ENCODE measurements at regions of chr4 and their contacts with region 1.

Region 1: DNA sequence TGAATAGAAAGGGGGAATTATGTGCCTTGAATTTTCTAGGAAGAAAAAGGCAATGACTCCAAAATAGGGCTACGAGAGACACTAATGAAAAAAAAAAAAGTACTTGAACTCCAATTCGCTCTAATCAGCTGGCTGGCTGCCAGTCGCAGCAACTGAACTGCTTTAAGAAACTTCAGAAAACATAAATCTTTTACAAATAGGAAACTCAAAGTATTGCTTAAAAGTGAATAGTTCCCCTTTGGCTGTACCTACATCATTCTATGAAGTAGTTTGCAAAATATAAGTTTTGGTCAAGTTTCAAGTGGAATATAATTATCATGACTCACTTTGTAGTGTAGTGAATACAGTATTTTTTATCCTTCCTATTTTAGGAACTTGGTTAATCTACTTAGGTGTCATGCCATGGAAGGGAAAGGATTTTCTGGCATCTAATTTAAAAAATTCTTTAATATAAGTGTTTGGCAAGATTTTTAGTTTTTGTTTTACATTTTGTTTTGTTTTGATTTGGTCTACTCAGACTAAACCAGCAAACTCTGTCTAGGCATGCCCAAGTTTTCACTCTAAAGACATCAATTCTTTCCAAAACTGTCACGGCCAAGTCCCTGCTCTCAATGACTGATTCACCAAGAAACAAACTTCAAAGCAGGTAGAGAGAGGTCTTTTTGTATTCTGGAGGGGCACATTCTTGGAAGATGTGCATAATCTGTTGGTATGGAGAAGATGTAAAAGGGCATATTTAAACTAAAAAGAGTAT is 382.4 kb upstream of the GALNT7 start:
- DNase-seq: peak; percentile 50
- H3K4me3 ChIP-seq: no peak overlapping the region
- H3K27ac ChIP-seq: no peak overlapping the region
- H3K4me1 ChIP-seq: peaks cover 11% of the 10 kb centered on the region
- H3K27me3 ChIP-seq: no peaks in the 10 kb centered on the region
- CTCF ChIP-seq: no peak

Region 2: GRCh38 chr4:173346074-173346473 is 559.9 kb after region 1 on chr4:
- CTCF ChIA-PET with region 1: no interaction called
- POLR2A ChIA-PET with region 1: interaction called, 17 read pairs
- intact Hi-C with region 1: no loop called
- DNase-seq: no peak
- H3K4me3 ChIP-seq: no peak overlapping the region
- H3K27ac ChIP-seq: no peak overlapping the region
- H3K4me1 ChIP-seq: peaks cover 23% of the 10 kb centered on the region
- H3K27me3 ChIP-seq: no peaks in the 10 kb centered on the region
- CTCF ChIP-seq: no peak